ENCODE measurements at regions of chr7 and their contacts with region 1.

Region 1: DNA sequence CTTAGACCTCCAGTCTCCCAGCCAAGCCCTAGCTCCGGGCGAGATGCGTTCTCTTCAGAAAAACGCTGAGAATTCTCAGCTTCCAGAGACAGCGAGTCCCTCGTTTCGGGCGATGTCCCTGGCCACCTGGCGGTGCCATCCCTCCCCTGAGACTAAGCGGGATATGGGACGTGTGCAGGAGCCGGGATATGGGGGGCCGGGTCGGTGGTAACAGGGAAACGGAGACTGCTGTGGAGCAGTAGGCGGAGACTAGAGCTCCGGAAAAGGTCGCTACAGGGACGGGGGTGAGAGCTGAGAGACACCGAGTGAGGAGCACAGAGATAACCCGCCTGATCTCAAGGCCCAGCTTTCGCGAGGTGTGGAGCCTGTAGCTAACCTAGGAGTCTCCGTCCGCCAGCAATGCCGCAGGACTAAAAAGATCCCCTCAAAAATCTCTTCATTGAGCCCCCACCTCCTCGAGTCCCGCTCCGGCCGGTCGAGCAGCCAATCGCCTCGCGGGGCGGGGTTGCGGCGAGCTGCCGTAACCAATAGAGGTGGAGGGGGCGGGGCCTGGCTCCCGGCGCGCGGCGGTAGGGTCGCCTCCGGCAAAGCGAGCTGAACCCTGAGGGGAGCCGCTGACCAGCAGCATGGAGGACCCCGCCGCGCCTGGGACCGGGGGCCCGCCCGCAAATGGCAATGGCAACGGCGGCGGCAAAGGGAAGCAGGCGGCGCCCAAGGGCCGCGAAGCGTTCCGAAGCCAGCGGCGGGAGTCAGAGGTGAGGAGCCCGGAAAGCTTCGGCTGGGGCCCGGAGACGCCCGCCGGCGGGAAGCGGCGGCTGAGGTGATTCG is at the start of gene STRIP2:
- DNase-seq: peak; percentile 96
- ATAC-seq: peak; percentile 80
- H3K4me3 Mint-ChIP-seq: peak within 1 kb of the TSS; percentile 90
- H3K27ac Mint-ChIP-seq: peak within 1 kb of the TSS; percentile 91
- H3K4me1 Mint-ChIP-seq: peaks cover 33% of the 10 kb centered on the region
- H3K27me3 Mint-ChIP-seq: peaks cover 7% of the 10 kb centered on the region
- total RNA-seq, gene STRIP2: 41.3 to 51.8 TPM

Region 2: DNA sequence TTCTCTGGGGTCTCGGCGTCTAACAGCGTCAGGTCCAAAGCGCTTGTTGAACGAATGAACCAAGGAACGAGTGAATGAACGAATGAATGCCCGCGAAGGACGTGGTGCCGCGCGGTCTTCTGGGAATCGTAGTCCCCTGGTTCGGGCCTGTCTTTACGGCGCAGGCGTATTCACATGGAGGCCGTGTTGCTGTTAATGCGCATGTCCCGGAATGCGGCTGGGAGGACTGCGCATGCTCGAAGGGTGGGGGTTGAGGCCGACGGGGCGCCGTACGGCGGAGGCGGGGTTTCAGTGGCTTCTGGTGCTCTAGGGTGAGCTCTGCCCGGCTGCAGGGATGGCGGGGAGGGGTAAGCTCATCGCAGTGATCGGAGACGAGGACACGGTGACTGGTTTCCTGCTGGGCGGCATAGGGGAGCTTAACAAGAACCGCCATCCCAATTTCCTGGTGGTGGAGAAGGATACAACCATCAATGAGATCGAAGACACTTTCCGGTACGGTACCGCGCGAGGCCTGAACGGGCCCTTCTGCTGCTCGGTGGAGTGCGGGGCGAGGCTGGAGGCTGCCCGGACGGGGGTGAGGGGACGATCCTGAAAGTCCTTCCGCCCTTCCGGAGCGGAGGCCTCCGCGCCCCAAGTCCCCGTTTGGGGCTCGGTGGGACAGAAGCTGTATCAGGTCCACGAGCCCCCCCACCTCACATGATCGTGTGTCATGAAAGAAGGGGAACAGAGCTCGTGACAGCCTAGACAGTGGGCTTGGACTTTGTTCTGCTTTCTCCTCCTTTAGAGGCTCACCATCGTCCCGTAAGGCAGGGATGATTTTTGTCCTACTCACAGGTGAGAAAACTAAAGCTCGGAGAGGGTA is 571.3 kb before region 1 on chr7 and contains the start of gene ATP6V1F:
- CTCF ChIA-PET with region 1: no interaction called
- POLR2A ChIA-PET with region 1: no interaction called
- intact Hi-C with region 1: loop called in 1 of 2 experiments (anchors 2 kb)
- DNase-seq: peak; percentile 100
- ATAC-seq: peak; percentile 91
- H3K4me3 Mint-ChIP-seq: peak within 1 kb of the TSS; percentile 77
- H3K27ac Mint-ChIP-seq: peak within 1 kb of the TSS; percentile 90
- H3K4me1 Mint-ChIP-seq: peaks cover 13% of the 10 kb centered on the region
- H3K27me3 Mint-ChIP-seq: no peaks in the 10 kb centered on the region
- total RNA-seq, gene ATP6V1F: 109 to 159 TPM

Region 3: DNA sequence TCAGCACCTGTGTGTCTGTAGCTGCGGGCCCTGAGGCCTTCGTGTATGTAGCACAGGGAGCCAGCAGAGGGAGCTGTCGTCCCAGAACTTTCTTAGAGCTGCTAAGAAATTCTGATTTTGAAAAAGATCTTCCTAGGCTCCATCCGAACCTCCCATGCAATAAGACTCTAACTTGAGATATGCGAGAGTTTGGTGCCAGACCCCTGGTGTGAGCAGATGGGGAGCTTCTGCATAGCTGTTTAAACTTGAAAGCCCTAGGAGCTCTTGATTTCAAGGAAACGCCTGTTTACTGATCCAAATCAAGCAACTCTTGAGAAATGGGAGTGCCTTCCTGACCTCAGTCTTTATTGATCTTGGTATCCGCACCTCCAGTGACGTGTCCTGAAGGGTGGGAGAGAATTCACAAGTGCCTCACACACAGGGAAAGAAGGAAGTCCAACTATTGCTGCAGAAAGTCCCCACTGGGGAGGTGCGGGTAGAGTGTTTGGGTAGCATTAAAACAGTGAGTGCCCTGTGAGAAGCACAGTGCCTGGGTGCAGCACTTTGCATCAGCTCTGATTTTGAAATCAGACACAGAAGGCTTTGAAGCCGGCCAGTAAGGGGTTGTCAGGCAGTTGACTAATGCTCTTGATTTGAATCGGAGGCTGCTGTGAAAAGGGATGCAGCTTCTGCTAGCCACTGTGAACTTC is 66.2 kb before region 1 on chr7:
- CTCF ChIA-PET with region 1: interaction called, 46 read pairs
- POLR2A ChIA-PET with region 1: interaction called, 12 read pairs
- intact Hi-C with region 1: loop called (anchors 1 to 2 kb)
- DNase-seq: peak; percentile 92
- ATAC-seq: peak; percentile 89
- H3K4me3 Mint-ChIP-seq: peak overlapping the region; percentile 57
- H3K27ac Mint-ChIP-seq: peak overlapping the region; percentile 95
- H3K4me1 Mint-ChIP-seq: peaks cover 38% of the 10 kb centered on the region
- H3K27me3 Mint-ChIP-seq: no peaks in the 10 kb centered on the region

Region 4: GRCh38 chr7:129468087-129468486 is 34.0 kb after region 1 on chr7:
- CTCF ChIA-PET with region 1: interaction called, 23 read pairs
- POLR2A ChIA-PET with region 1: interaction called, 10 read pairs
- intact Hi-C with region 1: loop called (anchors 1 to 2 kb)
- DNase-seq: no peak
- ATAC-seq: no peak
- H3K4me3 Mint-ChIP-seq: no peak overlapping the region
- H3K27ac Mint-ChIP-seq: no peak overlapping the region
- H3K4me1 Mint-ChIP-seq: peaks cover 16% of the 10 kb centered on the region
- H3K27me3 Mint-ChIP-seq: no peaks in the 10 kb centered on the region

Region 5: DNA sequence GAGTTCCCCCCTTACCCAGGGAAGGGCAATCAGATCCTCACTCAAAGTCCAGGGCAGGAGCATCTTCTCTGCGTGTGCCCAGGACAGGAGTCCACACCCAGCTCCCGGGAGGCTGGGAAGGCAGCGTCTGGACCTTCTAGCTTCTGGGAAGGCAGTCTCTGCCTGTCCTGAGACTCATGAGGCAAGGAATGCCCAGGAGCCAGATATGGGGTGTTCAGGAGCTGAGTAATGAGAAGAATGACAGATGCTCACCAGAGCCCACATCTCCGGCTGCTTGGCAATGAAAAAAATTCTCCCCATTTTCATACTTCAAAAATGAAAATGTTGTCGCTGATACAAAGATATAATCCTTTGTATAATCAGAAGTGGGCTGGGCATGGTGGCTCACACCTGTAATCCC is 109.8 kb after region 1 on chr7:
- CTCF ChIA-PET with region 1: no interaction called
- POLR2A ChIA-PET with region 1: no interaction called
- intact Hi-C with region 1: no loop called
- DNase-seq: no peak
- ATAC-seq: no peak
- H3K4me3 Mint-ChIP-seq: no peak overlapping the region
- H3K27ac Mint-ChIP-seq: no peak overlapping the region
- H3K4me1 Mint-ChIP-seq: no peaks in the 10 kb centered on the region
- H3K27me3 Mint-ChIP-seq: peaks cover 6% of the 10 kb centered on the region

Region 6: GRCh38 chr7:129611246-129612111 is 177.4 kb after region 1 on chr7 and contains the start of gene NRF1:
- CTCF ChIA-PET with region 1: interaction called, 4 read pairs
- POLR2A ChIA-PET with region 1: no interaction called
- intact Hi-C with region 1: loop called in 1 of 2 experiments (anchors 1 kb)
- DNase-seq: peak; percentile 96
- ATAC-seq: peak; percentile 87
- H3K4me3 Mint-ChIP-seq: peak within 1 kb of the TSS; percentile 90
- H3K27ac Mint-ChIP-seq: peak within 1 kb of the TSS; percentile 96
- H3K4me1 Mint-ChIP-seq: peaks cover 61% of the 10 kb centered on the region
- H3K27me3 Mint-ChIP-seq: no peaks in the 10 kb centered on the region
- total RNA-seq, gene NRF1: 20.5 to 28.9 TPM

Region 7: GRCh38 chr7:129952653-129953560 is 518.8 kb after region 1 on chr7 and contains the start of gene UBE2H:
- CTCF ChIA-PET with region 1: interaction called, 3 read pairs
- POLR2A ChIA-PET with region 1: interaction called, 3 read pairs
- intact Hi-C with region 1: loop called in 1 of 2 experiments (anchors 2 kb)
- DNase-seq: peak; percentile 96
- ATAC-seq: peak; percentile 66
- H3K4me3 Mint-ChIP-seq: no peak within 1 kb of the TSS
- H3K27ac Mint-ChIP-seq: peak within 1 kb of the TSS; percentile 99
- H3K4me1 Mint-ChIP-seq: peaks cover 8% of the 10 kb centered on the region
- H3K27me3 Mint-ChIP-seq: no peaks in the 10 kb centered on the region
- total RNA-seq, gene UBE2H: 25.6 to 40.7 TPM